ENCODE measurements at regions of chr15 and their contacts with region 1.

Region 1: GRCh38 chr15:99059010-99059981 is 45.6 kb upstream of the SYNM start:
- DNase-seq: peak; percentile 49
- H3K4me3 ChIP-seq: peak overlapping the region; percentile 41
- H3K27me3 ChIP-seq: peaks cover 1% of the 10 kb centered on the region; the same call in 1 of the 2 replicates
- CTCF ChIP-seq: peak; percentile 47

Region 2: GRCh38 chr15:99042892-99043291 is 16.4 kb before region 1 on chr15:
- CTCF ChIA-PET with region 1: interaction called, 14 read pairs
- POLR2A ChIA-PET with region 1: no interaction called
- DNase-seq: no peak
- H3K4me3 ChIP-seq: no peak overlapping the region
- H3K27me3 ChIP-seq: peaks cover 8% of the 10 kb centered on the region
- CTCF ChIP-seq: no peak

Measured in BJ (cell line).